ENCODE measurements at regions of chr9 and their contacts with region 1.

Region 1: GRCh38 chr9:119959846-119960545 is 590.8 kb upstream of the BRINP1 start:
- DNase-seq: no peak
- H3K4me3 ChIP-seq: no peak overlapping the region
- H3K27ac ChIP-seq: peak overlapping the region; percentile 23 to 43
- H3K4me1 ChIP-seq: peaks cover 0 to 24% of the 10 kb centered on the region in 2 donors
- H3K27me3 ChIP-seq: no peaks in the 10 kb centered on the region
- CTCF ChIP-seq: no peak

Region 2: GRCh38 chr9:119802621-119803020 is 157.4 kb before region 1 on chr9:
- intact Hi-C with region 1: loop called (anchors 5 kb)
- DNase-seq: peak; percentile 47 to 79
- H3K4me3 ChIP-seq: no peak overlapping the region
- H3K27ac ChIP-seq: peak overlapping the region in 1 of 2 donors; percentile 50
- H3K4me1 ChIP-seq: peaks cover 0 to 4% of the 10 kb centered on the region in 2 donors
- H3K27me3 ChIP-seq: no peaks in the 10 kb centered on the region
- CTCF ChIP-seq: no peak

Region 3: DNA sequence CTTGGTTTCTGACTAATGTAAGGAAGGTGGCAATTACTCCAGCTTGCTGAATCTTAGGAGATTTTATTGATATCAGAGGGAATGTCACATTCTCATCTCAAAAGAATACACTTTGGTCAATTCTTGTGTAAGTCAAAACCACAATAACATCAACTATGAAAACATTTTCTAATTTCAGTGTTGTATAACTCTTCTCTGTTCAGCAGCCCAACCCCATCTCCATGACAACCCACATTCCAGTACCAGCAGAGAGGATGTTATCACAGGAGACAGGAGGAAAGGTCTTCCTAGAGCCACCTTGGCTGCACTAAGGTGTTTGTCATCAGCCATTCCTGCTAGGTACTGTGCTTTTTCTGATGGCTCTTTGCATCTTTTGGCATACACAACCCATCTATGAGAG is 61.7 kb before region 1 on chr9:
- intact Hi-C with region 1: no loop called
- DNase-seq: no peak
- H3K4me3 ChIP-seq: no peak overlapping the region
- H3K27ac ChIP-seq: no peak overlapping the region
- H3K4me1 ChIP-seq: no peaks in the 10 kb centered on the region
- H3K27me3 ChIP-seq: no peaks in the 10 kb centered on the region
- CTCF ChIP-seq: no peak

Measured in ascending aorta (tissue), 2 donors.